ENCODE measurements at regions of chr1 and their contacts with region 1.

Region 1: GRCh38 chr1:21607549-21608529 is 61.3 kb downstream of the RAP1GAP start:
- DNase-seq: peak; percentile 99 to 100 (median 100)
- ATAC-seq: peak; percentile 97
- H3K4me3 ChIP-seq: peak overlapping the region; percentile 26
- H3K27ac ChIP-seq: peak overlapping the region; percentile 80
- H3K4me1 ChIP-seq: peaks cover 43 to 71% of the 10 kb centered on the region in 2 experiments
- H3K27me3 ChIP-seq: no peaks in the 10 kb centered on the region
- CTCF ChIP-seq: no peak
- EP300 ChIP-seq: no peak
- POLR2A ChIP-seq: peak; percentile 82
- RAD21 ChIP-seq: peak in 1 of 2 experiments; percentile 9; a peak in 1 of 4 replicates

Region 2: DNA sequence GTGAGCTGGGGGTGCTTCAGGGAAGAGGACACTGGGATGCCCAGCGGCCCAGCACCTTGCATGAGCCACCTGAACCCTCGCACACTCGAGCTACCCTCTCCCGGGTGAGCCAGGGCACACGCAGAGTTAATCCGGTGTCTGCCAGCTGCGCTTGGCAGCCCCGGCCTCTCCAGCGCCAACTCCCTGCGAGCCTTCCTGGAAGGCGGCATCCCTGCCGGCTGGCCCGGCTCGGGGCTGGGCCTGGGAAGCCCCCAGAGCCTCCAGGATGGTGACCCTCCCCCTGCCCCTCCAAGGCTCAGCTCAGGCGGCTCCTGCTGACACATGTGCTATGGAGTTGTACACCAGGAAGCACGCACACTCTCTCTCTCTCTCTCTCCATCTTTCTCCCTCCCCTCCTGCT is 12.7 kb after region 1 on chr1:
- CTCF ChIA-PET with region 1: no interaction called
- POLR2A ChIA-PET with region 1: interaction called, 12 read pairs
- in situ Hi-C with region 1: no loop called
- intact Hi-C with region 1: no loop called
- DNase-seq: no peak
- ATAC-seq: no peak
- H3K4me3 ChIP-seq: no peak overlapping the region
- H3K27ac ChIP-seq: no peak overlapping the region
- H3K4me1 ChIP-seq: peaks cover 38 to 71% of the 10 kb centered on the region in 2 experiments
- H3K27me3 ChIP-seq: no peaks in the 10 kb centered on the region
- CTCF ChIP-seq: no peak
- EP300 ChIP-seq: no peak
- POLR2A ChIP-seq: no peak
- RAD21 ChIP-seq: no peak

Region 3: DNA sequence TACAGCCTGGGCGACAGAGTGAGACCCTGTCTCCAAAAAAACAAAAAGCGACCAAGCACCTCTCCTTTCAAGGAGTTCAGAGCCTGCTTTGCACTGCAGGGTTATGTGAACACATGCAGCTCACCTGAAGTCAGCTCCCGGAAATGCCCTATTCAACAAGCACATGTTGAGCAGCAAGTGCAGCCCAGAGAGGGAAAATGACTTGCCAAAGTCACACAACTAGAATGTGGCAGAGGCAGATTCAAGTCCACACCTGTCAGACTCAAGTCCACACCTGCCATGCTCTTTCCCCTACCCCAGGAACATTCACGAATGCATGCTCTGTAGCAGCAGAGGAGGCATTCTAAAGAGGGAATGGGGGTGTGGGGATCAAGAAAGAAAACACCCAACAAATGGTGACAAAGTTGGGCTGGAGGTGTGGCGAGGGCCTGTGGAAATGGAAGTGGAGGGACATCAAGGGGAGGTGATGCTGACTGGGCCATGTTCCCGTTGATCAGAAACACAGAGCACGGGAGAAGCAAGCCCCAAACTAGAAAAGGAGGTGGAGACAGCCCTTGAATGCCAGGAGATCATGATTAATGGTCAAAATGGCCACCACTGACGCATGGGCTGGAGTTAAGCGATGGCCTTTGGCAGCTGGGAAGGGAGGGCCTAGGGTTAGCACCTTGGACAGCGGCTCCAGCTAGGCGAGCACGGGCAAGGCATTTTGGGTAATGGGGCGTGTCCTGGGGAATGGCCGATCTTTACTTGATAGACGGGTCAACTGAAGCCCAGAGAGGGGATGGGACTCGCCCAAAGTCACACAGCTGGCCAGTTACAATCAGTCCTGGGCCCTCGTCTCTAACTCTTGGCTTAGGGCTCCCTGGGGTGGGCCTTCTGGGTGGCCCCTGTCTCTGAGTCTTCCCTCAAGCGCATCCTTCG is 39.9 kb after region 1 on chr1:
- CTCF ChIA-PET with region 1: no interaction called
- POLR2A ChIA-PET with region 1: interaction called, 11 read pairs
- in situ Hi-C with region 1: no loop called
- intact Hi-C with region 1: no loop called
- DNase-seq: peak; percentile 87 to 98 (median 90)
- ATAC-seq: peak; percentile 92
- H3K4me3 ChIP-seq: no peak overlapping the region
- H3K27ac ChIP-seq: no peak overlapping the region
- H3K4me1 ChIP-seq: peaks cover 20 to 42% of the 10 kb centered on the region in 2 experiments; a peak in 4 of 5 replicates
- H3K27me3 ChIP-seq: no peaks in the 10 kb centered on the region; a peak in 1 of 5 replicates
- CTCF ChIP-seq: no peak
- EP300 ChIP-seq: peak; percentile 54; the same call in 1 of the 2 replicates
- POLR2A ChIP-seq: no peak
- RAD21 ChIP-seq: peak in 1 of 2 experiments; percentile 38; a peak in 2 of 4 replicates

Measured in K562 (cell line).